Right ventricle myocardium superior (tissue), 1 donor: ENCODE measurements at regions of chr3 and their contacts with region 1.

Region 1: GRCh38 chr3:43503067-43503728 is 118.6 kb downstream of the ANO10 start:
- DNase-seq: no peak
- ATAC-seq: peak; percentile 59

Region 2: GRCh38 chr3:43162230-43163084 is 340.7 kb before region 1 on chr3:
- intact Hi-C with region 1: loop called (anchors 2 kb)
- DNase-seq: no peak
- ATAC-seq: peak; percentile 82

Region 3: DNA sequence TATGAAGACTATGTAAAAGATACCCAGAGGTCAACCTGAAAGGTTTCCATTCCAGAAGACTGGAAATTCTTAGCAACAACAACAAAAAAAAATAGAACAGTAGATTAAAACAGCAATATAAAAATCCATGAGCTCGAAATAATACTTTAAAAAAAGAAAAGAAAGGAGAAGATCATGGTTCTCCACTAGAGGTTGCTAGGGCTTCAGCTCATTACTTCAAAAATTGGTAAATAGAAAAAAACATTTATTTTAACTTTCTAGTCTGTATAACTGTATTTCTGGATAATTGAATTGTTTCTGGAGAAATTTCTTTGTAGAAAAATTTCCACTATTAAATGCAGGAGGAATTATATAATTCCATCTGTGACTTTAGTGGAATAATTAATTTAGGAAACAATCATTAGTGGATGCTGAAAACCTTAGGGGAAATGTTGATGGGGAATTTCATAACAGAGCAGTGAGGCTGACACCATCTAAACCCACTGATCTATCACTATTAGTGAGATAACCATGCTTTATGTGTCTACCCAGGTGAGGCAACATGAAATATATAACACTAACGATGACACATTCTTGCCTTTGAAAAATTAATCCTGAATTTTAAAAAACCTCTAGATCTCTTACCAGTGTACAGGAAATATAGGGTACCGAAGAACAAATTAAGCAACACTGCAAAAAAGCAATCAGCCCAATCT is 279.4 kb before region 1 on chr3:
- intact Hi-C with region 1: loop called (anchors 10 kb)
- DNase-seq: no peak
- ATAC-seq: no peak

Region 4: GRCh38 chr3:43405888-43406642 is 97.1 kb before region 1 on chr3:
- intact Hi-C with region 1: loop called (anchors 10 kb)
- DNase-seq: peak; percentile 48
- ATAC-seq: peak; percentile 89

Region 5: DNA sequence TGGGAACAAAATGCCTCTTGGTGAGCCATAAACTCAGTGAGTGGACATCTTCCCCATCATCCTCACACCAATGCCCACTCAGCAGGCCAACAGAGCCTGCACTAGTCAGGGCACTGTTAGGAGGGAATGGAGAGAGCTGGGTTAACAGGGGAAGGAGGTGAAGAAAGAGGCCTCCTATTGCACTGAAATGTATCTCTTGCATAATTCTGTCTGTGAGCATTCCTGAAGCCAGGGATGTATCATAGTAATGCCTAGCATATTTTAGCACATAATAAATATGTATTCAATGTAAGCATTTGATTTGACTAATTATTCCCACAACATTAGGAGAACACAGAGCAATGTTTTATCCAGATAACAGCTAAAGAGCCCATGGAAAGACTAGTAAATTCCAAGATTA is 37.4 kb after region 1 on chr3:
- intact Hi-C with region 1: no loop called
- DNase-seq: no peak
- ATAC-seq: no peak